Activated CD4-positive, alpha-beta T cell treated with anti-CD3 and anti-CD28 coated beads, Interleukin-2, amount 10 ng/mL, durations not matched to agents 24 days and 14 days (primary cell): ENCODE measurements at regions of chr6 and their contacts with region 1.

Region 1: DNA sequence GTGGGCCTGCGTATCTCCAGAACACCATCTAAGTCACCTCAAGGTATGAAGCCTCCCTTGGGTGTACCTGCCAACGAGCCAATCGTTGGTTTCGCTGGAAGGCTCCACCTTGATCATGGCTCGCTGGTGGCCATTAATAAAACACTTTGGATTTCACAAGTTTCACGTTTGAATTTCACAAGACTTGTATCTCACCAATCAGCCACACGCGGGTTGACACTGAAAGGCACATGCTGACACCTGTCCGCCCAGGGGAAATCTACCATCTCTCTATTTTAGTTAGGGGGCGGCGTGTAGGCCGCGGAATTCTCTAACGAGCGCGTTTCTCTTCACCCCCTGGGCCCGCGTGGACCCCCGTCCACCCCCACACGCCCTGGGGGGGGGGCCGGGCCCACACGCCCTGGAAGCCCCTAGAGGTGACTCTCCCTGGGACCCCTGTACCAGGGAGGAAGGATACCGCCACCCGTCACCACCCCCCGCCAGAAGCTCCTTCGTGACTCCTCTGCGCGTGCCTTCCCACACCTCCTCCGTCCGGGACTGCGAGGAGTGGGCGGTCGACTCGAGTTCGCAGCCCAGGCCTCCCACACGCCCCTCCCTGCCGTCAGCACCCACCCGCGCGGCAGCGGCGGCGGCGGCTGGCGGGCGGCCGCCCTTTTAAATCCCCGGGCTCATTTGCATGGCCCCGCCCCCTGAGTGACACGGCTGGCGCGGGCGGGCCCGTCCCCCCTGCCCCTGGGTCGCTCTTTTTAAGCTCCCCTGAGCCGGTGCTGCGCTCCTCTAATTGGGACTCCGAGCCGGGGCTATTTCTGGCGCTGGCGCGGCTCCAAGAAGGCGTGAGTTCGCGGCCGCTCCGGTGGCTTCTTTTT is at the start of gene HMGA1:
- DNase-seq: peak; percentile 96
- H3K4me3 Mint-ChIP-seq: peak within 1 kb of the TSS; percentile 91
- H3K27ac Mint-ChIP-seq: peak within 1 kb of the TSS; percentile 95
- H3K4me1 Mint-ChIP-seq: peaks cover 32% of the 10 kb centered on the region
- H3K27me3 Mint-ChIP-seq: no peaks in the 10 kb centered on the region
- total RNA-seq, gene HMGA1: 509 and 520 TPM in 2 replicates

Region 2: DNA sequence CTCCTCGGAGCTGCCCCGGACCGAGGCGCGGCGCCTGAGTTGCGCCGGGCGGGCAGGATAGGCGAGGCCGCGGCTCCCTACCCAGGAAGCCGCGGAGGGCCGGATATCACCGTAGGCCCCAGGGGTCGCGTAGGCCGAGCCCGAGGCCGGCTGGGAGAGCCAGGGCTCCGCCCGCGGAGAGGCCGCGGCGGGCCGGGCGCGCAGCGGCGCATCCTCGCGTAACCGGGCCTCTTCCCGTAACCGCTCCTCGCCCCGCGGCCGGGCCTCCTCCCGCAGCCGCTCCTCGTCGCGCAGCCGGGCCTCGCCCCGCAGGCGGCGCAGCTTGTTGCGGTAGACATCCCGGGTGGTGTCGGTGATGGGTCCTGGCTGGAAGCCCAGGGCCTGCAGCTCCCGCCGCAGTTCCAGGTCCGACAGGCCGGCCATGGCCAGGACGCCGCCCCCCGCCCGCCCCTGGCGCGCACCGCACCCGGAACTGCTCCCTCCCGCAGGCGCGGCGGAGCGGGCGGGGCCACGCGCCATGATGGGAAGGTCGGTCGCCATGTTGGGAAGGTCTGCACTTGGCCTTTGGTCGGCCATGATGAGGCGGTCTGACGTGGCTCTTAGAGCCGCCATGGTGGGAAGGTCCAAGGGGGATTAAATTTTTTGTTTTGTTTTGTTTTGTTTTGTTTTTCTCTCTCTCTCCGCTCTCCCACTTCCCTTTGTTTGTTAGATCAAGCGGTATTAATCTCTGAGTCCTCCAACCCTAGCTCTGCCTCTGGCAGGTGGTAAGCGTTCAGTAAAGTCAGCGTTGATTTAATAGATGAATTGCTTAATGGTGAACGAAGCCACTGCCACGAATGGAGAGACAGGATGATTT is 447.4 kb before region 1 on chr6 and contains the start of gene LEMD2:
- intact Hi-C with region 1: loop called (anchors 10 kb)
- DNase-seq: peak; percentile 99
- H3K4me3 Mint-ChIP-seq: peak within 1 kb of the TSS; percentile 88
- H3K27ac Mint-ChIP-seq: peak within 1 kb of the TSS; percentile 93
- H3K4me1 Mint-ChIP-seq: peaks cover 40% of the 10 kb centered on the region
- H3K27me3 Mint-ChIP-seq: peaks cover 18% of the 10 kb centered on the region
- total RNA-seq, gene LEMD2: 64.3 and 66.4 TPM in 2 replicates

Region 3: GRCh38 chr6:34027445-34027936 is 208.9 kb before region 1 on chr6:
- intact Hi-C with region 1: no loop called
- DNase-seq: peak; percentile 90
- H3K4me3 Mint-ChIP-seq: no peak overlapping the region
- H3K27ac Mint-ChIP-seq: no peak overlapping the region
- H3K4me1 Mint-ChIP-seq: no peaks in the 10 kb centered on the region
- H3K27me3 Mint-ChIP-seq: peaks cover 4% of the 10 kb centered on the region

Region 4: DNA sequence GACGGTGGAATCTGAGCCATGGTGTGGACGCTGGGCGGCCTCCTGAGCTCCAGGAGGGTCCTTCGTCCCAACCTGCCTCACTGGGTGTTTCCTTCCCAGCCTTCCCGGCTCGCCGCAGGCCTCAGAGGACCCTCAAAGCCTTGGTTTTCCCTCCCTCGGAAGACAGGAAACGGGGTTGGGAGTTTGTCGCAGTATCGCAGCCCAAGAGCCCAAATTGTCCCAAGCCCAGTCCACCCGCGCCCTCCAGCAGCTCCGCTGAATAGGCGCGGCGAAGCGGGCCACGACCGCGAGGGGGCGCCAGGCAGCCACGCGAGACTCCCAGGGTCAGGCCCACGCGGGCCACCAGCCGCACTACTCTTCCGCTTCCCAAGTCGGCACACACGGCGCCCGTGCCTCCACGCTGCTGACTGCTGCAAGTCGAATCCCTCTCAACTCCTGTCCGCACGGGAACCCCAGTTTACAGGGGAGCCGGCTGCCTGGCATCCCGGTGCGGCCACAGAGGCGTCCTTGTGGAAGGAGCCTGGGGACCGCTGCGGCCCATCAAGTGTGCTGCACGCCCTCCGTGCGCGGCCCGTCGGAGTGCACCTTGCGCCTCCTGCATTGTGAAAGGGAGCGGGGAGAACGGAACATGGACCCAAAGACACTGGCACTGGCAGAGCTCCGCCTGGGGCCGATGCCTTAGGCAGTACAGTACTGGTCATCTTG is 40.1 kb before region 1 on chr6:
- intact Hi-C with region 1: loop called (anchors 1 kb)
- DNase-seq: peak; percentile 97
- H3K4me3 Mint-ChIP-seq: peak overlapping the region; percentile 80
- H3K27ac Mint-ChIP-seq: peak overlapping the region; percentile 48
- H3K4me1 Mint-ChIP-seq: peaks cover 9% of the 10 kb centered on the region
- H3K27me3 Mint-ChIP-seq: peaks cover 14% of the 10 kb centered on the region

Region 5: GRCh38 chr6:34223956-34224940 is 12.1 kb before region 1 on chr6:
- intact Hi-C with region 1: loop called (anchors 1 kb)
- DNase-seq: peak; percentile 98
- H3K4me3 Mint-ChIP-seq: peak overlapping the region; percentile 67
- H3K27ac Mint-ChIP-seq: peak overlapping the region; percentile 77
- H3K4me1 Mint-ChIP-seq: peaks cover 25% of the 10 kb centered on the region
- H3K27me3 Mint-ChIP-seq: peaks cover 3% of the 10 kb centered on the region